ENCODE measurements at regions of chr7 and their contacts with region 1.

Region 1: GRCh38 chr7:99478464-99479440 is 6.1 kb downstream of the ZNF789 start:
- DNase-seq: no peak
- H3K4me3 ChIP-seq: no peak overlapping the region
- H3K27ac ChIP-seq: no peak overlapping the region
- H3K4me1 ChIP-seq: peaks cover 3% of the 10 kb centered on the region
- H3K27me3 ChIP-seq: no peaks in the 10 kb centered on the region
- CTCF ChIP-seq: no peak

Region 2: GRCh38 chr7:99558306-99559174 is 79.8 kb after region 1 on chr7 and contains the start of gene ZNF655:
- CTCF ChIA-PET with region 1: no interaction called
- dilution Hi-C with region 1: loop called (anchors 5 kb)
- in situ Hi-C with region 1: no loop called
- intact Hi-C with region 1: no loop called
- DNase-seq: peak; percentile 73
- H3K4me3 ChIP-seq: peak within 1 kb of the TSS; percentile 78 to 81 (median 81)
- H3K27ac ChIP-seq: peak within 1 kb of the TSS; percentile 73
- H3K4me1 ChIP-seq: peaks cover 43% of the 10 kb centered on the region
- H3K27me3 ChIP-seq: no peaks in the 10 kb centered on the region
- CTCF ChIP-seq: no peak
- total RNA-seq, gene ZNF655: 64.5 to 66.0 TPM

Region 3: GRCh38 chr7:99848420-99849216 is 369.9 kb after region 1 on chr7:
- CTCF ChIA-PET with region 1: no interaction called
- dilution Hi-C with region 1: loop called (anchors 5 kb)
- in situ Hi-C with region 1: no loop called
- intact Hi-C with region 1: no loop called
- DNase-seq: no peak
- H3K4me3 ChIP-seq: no peak overlapping the region
- H3K27ac ChIP-seq: no peak overlapping the region
- H3K4me1 ChIP-seq: no peaks in the 10 kb centered on the region
- H3K27me3 ChIP-seq: no peaks in the 10 kb centered on the region
- CTCF ChIP-seq: no peak